Panc1 (cell line): ENCODE measurements at regions of chr3 and their contacts with region 1.

Region 1: DNA sequence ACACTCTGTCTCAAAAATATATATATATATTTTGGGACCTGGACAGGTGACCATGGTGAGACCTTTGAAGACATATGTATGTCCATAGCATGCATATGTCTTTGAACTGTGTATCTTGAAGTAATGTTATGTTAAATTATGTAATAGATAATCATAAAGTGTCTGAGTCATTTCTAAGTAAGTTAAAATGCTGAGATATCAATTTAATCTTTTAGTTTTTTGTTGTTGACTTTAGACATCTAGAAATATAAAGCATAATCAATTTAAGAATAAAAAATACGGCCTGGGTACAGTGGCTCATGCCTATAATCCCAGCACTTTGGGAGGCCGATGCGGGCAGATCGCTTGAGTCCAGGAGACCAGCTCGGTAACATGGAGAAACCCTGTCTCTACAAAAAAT is 12.7 kb upstream of the SETD2 start:
- DNase-seq: no peak
- ATAC-seq: no peak
- H3K4me3 ChIP-seq: no peak overlapping the region
- H3K27ac ChIP-seq: no peak overlapping the region
- H3K4me1 ChIP-seq: no peaks in the 10 kb centered on the region
- H3K27me3 ChIP-seq: no peaks in the 10 kb centered on the region
- CTCF ChIP-seq: no peak

Region 2: DNA sequence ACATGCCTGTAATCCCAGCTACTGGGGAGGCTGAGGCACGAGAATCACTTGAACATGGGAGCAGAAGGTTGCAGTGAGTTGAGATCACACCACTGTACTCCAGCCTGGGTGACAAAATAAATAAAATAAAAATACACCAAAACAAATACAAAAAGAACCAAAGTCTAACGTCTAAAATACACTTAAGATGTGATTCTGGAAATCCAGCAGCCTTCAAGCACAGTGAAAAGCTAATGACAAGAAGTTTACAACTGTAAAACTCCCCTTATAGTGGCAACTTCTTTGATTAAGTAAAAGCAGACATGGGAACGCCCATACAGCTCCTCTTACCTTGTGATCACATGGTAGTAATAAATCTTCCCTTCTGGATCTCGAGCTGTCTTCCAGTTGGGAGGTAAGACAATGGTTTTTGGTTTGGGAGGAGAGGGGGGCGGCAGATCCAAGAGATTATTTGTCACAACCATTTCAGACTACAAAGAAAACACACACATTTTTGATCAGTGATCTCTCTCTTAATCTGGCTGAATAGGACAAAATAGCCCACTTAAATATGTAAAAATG is 134.3 kb before region 1 on chr3:
- CTCF ChIA-PET with region 1: no interaction called
- POLR2A ChIA-PET with region 1: no interaction called
- in situ Hi-C with region 1: no loop called
- intact Hi-C with region 1: no loop called
- DNase-seq: no peak
- ATAC-seq: no peak
- H3K4me3 ChIP-seq: no peak overlapping the region
- H3K27ac ChIP-seq: no peak overlapping the region
- H3K4me1 ChIP-seq: no peaks in the 10 kb centered on the region
- H3K27me3 ChIP-seq: no peaks in the 10 kb centered on the region
- CTCF ChIP-seq: no peak

Region 3: GRCh38 chr3:47164007-47164881 is 12.3 kb before region 1 on chr3 and contains the start of gene SETD2:
- CTCF ChIA-PET with region 1: interaction called, 10 read pairs
- POLR2A ChIA-PET with region 1: no interaction called
- in situ Hi-C with region 1: no loop called
- intact Hi-C with region 1: no loop called
- DNase-seq: peak; percentile 39
- ATAC-seq: peak; percentile 96
- H3K4me3 ChIP-seq: peak within 1 kb of the TSS; percentile 70 to 82
- H3K27ac ChIP-seq: peak within 1 kb of the TSS; percentile 88
- H3K4me1 ChIP-seq: peaks cover 11% of the 10 kb centered on the region; the same call in 1 of the 2 replicates
- H3K27me3 ChIP-seq: no peaks in the 10 kb centered on the region
- CTCF ChIP-seq: peak; percentile 51
- total RNA-seq, gene SETD2: 32.6 TPM

Region 4: DNA sequence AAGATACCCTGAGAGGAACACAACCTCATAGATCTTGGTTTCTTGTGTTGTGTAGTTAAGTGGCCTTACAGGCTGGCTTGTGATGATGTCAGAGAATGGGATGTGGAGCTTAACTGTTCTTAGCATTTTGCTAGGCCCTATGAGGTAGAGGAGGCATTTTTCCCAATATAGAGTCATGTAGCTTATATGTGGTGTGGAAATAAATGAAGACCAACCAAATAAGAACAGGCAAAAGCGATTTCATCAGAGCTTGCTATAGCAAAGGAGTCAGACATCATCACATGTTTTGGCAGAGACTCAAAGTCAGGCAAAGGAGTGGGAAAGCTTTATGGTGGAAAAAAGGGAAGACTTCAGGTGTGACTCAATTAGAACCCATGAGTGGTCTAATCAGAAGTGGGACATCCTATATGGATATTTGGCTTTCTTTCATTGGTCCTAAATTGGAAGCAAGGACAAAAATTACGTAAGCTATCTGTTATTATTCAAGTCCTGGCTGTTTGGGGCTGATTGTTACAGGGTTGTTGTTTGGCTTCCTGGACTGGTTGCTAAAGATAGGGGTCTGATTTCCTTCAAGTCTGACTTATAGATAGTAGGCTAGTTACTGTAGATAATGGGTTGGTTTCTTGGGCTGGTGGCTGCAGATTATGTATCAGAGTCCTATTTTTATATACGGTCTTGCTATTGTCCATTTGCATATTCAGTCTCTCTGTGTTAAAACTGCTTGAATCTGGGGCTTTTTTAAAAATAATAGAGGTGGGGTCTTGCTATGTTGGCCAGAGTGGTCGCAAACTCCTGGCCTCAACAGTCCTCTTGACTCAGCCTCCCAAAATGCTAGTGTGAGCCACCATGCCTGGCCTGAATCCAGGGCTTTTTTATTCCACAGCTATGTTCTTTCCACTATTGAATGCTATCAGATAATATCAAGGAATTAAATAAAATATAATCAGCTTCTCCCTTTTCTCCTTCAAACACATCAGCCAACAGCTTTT is 17.6 kb after region 1 on chr3:
- CTCF ChIA-PET with region 1: no interaction called
- POLR2A ChIA-PET with region 1: no interaction called
- in situ Hi-C with region 1: no loop called
- intact Hi-C with region 1: no loop called
- DNase-seq: no peak
- ATAC-seq: no peak
- H3K4me3 ChIP-seq: no peak overlapping the region
- H3K27ac ChIP-seq: no peak overlapping the region
- H3K4me1 ChIP-seq: no peaks in the 10 kb centered on the region
- H3K27me3 ChIP-seq: no peaks in the 10 kb centered on the region
- CTCF ChIP-seq: no peak